ENCODE measurements at regions of chr20 and their contacts with region 1.

Region 1: GRCh38 chr20:50569864-50570836 is 60.0 kb downstream of the PTPN1 start:
- DNase-seq: peak; percentile 85
- H3K4me3 Mint-ChIP-seq: peak overlapping the region; percentile 32
- H3K27ac Mint-ChIP-seq: peak overlapping the region; percentile 83
- H3K4me1 Mint-ChIP-seq: peaks cover 72% of the 10 kb centered on the region
- H3K27me3 Mint-ChIP-seq: no peaks in the 10 kb centered on the region

Region 2: DNA sequence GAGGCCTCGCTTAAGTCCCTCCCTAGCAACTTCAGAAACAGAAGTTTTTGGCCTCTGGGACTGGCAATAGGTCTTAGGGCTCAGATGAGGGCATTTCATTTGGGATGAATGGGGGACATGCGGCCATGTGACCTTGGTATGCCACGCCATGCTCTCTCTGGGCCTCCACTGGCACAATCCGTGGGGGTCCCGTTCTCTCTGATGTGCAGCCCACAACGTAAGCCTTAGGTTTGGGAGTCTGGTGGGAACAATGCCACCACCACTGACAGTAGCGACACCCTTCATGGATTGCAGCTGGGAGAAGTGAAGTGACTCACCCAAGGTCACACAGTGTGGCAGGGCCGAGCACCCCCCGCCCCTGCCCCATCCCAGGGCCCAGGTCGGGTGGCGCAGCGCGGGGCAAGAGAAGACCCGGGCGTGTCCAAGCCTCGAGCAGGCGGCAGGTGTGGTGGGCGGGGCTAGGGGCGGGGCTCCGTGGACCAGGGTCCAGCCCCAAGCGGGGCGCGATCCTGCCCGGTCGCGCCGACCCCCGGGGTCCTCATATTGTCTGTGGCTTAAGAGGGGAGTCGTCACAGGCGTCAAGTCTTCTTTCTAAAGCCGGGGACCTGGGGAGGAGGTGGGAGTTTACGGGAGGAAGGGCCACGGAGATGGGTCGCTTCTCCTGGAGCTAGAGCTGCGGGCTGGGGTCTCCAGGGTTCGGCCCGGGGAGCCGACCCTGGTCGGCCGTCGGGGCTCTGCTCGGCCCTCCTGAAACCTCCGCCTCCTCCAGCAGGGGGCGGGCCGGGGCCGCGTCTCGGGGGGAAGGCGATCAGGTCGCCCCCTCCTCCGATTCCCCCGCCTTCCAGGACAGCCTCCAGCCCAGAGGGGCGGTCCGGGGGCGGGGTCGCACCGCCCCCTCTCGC is 380.2 kb before region 1 on chr20:
- intact Hi-C with region 1: loop called (anchors 5 kb)
- DNase-seq: peak; percentile 96
- H3K4me3 Mint-ChIP-seq: peak overlapping the region; percentile 55
- H3K27ac Mint-ChIP-seq: peak overlapping the region; percentile 41
- H3K4me1 Mint-ChIP-seq: peaks cover 30% of the 10 kb centered on the region
- H3K27me3 Mint-ChIP-seq: peaks cover 11% of the 10 kb centered on the region

Region 3: GRCh38 chr20:50478162-50479036 is 91.8 kb before region 1 on chr20:
- intact Hi-C with region 1: loop called (anchors 1 kb)
- DNase-seq: peak; percentile 94
- H3K4me3 Mint-ChIP-seq: no peak overlapping the region
- H3K27ac Mint-ChIP-seq: no peak overlapping the region
- H3K4me1 Mint-ChIP-seq: peaks cover 31% of the 10 kb centered on the region
- H3K27me3 Mint-ChIP-seq: no peaks in the 10 kb centered on the region

Region 4: DNA sequence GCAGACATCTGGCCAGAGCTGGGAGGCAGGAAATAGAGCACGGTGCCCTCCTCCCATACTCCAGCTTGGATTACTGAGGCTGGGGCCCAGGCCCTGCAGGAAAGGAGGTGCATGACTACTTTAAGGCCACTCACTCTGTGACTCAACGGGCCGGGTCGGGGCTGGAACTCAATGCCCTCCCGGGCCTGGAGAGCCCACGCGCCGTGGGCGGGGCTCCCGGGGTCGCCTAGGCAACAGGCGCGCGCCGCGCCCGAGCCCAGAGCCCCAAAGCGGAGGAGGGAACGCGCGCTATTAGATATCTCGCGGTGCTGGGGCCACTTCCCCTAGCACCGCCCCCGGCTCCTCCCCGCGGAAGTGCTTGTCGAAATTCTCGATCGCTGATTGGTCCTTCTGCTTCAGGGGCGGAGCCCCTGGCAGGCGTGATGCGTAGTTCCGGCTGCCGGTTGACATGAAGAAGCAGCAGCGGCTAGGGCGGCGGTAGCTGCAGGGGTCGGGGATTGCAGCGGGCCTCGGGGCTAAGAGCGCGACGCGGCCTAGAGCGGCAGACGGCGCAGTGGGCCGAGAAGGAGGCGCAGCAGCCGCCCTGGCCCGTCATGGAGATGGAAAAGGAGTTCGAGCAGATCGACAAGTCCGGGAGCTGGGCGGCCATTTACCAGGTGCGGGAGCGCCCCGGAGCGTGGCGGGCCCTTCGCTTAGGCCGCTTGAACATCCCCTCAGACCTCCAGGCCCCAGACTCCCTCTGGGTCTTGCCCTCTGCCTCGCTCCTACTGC is 60.0 kb before region 1 on chr20 and contains the start of gene PTPN1:
- intact Hi-C with region 1: loop called (anchors 1 kb)
- DNase-seq: peak; percentile 100
- H3K4me3 Mint-ChIP-seq: peak within 1 kb of the TSS; percentile 98
- H3K27ac Mint-ChIP-seq: peak within 1 kb of the TSS; percentile 93
- H3K4me1 Mint-ChIP-seq: peaks cover 44% of the 10 kb centered on the region
- H3K27me3 Mint-ChIP-seq: no peaks in the 10 kb centered on the region
- total RNA-seq, gene PTPN1: 61.4 and 62.9 TPM in 2 replicates

Region 5: GRCh38 chr20:50518270-50518721 is 51.9 kb before region 1 on chr20:
- intact Hi-C with region 1: loop called (anchors 1 kb)
- DNase-seq: peak; percentile 74
- H3K4me3 Mint-ChIP-seq: peak overlapping the region; percentile 85
- H3K27ac Mint-ChIP-seq: peak overlapping the region; percentile 94
- H3K4me1 Mint-ChIP-seq: peaks cover 76% of the 10 kb centered on the region
- H3K27me3 Mint-ChIP-seq: no peaks in the 10 kb centered on the region

Region 6: DNA sequence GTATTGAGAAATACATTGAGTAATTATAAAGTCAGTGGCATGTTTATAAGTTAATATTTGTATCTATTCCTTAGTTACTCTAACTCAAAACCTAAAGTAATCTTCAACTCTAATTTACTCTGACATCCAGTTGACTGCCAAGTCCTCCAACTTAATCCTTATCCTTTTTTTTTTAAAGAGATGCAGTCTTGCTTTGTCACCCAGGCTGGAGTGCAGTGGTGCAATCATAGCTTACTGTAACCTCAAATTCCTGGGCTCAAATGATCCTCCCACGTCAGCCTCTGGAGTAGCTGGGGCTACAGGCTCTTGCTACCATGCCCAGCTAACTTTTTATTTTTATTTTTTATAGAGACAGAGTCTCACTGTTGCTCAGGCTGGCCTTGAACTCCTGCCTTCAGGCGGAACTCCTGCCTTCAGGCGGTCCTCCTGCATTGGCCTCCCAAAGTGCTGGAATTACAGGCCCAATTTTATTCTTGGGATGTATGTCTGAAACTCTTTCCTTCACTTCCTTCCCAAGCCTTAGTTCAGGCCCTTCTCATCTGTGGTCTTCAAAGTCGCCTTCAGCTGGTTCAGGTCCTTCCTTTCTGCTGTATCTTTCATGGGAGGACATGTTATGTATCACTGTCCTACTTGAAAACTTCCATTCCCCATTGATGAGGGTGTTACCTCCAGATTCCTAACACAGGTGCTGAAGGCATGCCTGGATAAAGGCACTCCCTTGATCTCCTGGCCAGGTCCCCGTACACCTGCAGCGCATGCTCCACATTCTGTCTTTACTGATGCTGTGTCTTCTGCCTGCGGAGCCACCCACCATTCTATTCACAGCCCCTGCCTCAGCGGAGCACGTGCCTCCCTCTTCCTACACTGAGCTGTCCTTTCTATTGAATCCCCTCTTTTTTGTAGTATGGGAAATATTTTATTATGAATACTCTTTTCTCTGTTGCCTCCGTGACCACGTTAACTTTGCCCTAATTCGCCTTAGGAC is 35.3 kb before region 1 on chr20:
- intact Hi-C with region 1: no loop called
- DNase-seq: no peak
- H3K4me3 Mint-ChIP-seq: no peak overlapping the region
- H3K27ac Mint-ChIP-seq: peak overlapping the region; percentile 2
- H3K4me1 Mint-ChIP-seq: peaks cover 39% of the 10 kb centered on the region
- H3K27me3 Mint-ChIP-seq: no peaks in the 10 kb centered on the region